ENCODE measurements at regions of chr7 and their contacts with region 1.

Region 1: DNA sequence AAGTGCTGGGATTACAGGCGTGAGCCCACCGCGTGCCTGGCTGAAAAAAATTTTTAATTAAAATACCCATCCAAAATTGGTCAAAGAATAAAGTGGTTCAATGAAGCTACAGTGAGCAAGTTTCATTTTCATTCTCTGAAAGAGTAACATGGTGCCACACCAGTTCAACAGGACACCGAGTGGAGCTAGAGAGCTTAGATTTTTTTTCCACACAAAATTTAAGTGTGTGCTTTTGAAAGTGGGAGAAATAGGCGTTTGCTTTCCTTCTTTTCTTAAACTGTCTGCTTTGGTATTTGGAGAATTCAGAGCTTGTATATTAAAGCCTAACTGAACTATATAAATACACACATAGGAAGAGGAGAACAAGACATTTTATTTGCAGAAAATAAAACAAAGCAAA is 43.4 kb downstream of the BPGM start:
- DNase-seq: no peak
- H3K4me3 ChIP-seq: no peak overlapping the region
- CTCF ChIP-seq: peak; percentile 41

Region 2: GRCh38 chr7:132793474-132793873 is 1896.5 kb before region 1 on chr7:
- CTCF ChIA-PET with region 1: no interaction called
- POLR2A ChIA-PET with region 1: no interaction called
- DNase-seq: no peak
- H3K4me3 ChIP-seq: no peak overlapping the region
- CTCF ChIP-seq: no peak

Region 3: GRCh38 chr7:134676743-134677142 is 13.3 kb before region 1 on chr7:
- CTCF ChIA-PET with region 1: interaction called, 32 read pairs
- POLR2A ChIA-PET with region 1: no interaction called
- DNase-seq: no peak
- H3K4me3 ChIP-seq: no peak overlapping the region
- CTCF ChIP-seq: no peak

Region 4: DNA sequence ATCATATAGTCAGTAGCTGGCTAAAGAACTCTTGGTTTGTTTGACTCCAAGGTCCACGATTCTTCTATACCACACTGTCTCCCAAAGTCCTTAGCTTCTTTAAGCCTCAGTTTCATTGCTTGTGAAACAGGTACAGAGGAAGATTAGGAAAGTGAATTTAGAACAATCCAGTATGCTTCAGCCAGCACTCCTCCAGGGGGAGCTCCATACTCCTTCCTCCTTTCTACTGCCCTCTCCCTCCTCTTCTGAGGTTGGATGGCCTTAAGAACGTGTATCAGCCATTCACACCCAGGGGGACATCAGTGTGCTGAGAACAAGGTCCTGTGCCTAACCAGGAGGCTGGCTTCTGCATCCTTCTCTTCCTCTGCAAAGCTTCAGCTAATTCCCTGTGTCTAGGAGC is 34.6 kb after region 1 on chr7:
- CTCF ChIA-PET with region 1: interaction called, 20 read pairs
- POLR2A ChIA-PET with region 1: interaction called, 4 read pairs
- DNase-seq: no peak
- H3K4me3 ChIP-seq: no peak overlapping the region
- CTCF ChIP-seq: peak; percentile 69

Region 5: GRCh38 chr7:134778941-134779740 is 89.1 kb after region 1 on chr7 and contains the start of gene CALD1:
- CTCF ChIA-PET with region 1: interaction called, 80 read pairs
- POLR2A ChIA-PET with region 1: interaction called, 127 read pairs
- DNase-seq: peak; percentile 99
- H3K4me3 ChIP-seq: peak within 1 kb of the TSS; percentile 83
- CTCF ChIP-seq: no peak

Region 6: DNA sequence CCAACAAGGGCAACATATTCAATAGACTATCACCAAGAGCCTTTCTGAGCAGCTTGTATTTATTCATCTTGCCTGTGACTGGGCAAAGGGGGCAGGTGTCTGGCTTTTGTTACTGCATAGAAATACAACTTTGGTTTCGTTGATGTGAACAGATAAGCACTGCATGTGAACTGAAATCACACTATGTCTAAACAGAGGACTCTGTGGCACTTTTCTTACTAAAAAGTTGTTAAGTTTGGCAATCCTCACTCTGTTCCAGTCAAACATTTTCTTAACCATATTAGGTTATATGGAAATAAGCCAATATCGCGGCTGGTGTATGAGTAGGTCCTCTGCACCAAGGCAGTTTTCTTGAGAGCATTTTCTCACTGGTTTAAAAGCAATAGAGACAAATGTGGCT is 137.9 kb after region 1 on chr7:
- CTCF ChIA-PET with region 1: interaction called, 10 read pairs
- POLR2A ChIA-PET with region 1: no interaction called
- DNase-seq: no peak
- H3K4me3 ChIP-seq: no peak overlapping the region
- CTCF ChIP-seq: no peak

Region 7: GRCh38 chr7:134986363-134987251 is 296.6 kb after region 1 on chr7 and contains the start of gene AGBL3:
- CTCF ChIA-PET with region 1: interaction called, 15 read pairs
- POLR2A ChIA-PET with region 1: no interaction called
- DNase-seq: peak; percentile 47
- H3K4me3 ChIP-seq: peak within 1 kb of the TSS; percentile 87
- CTCF ChIP-seq: peak; percentile 67

Measured in AG04449 (cell line).